H1 (cell line): ENCODE measurements at regions of chr11 and their contacts with region 1.

Region 1: DNA sequence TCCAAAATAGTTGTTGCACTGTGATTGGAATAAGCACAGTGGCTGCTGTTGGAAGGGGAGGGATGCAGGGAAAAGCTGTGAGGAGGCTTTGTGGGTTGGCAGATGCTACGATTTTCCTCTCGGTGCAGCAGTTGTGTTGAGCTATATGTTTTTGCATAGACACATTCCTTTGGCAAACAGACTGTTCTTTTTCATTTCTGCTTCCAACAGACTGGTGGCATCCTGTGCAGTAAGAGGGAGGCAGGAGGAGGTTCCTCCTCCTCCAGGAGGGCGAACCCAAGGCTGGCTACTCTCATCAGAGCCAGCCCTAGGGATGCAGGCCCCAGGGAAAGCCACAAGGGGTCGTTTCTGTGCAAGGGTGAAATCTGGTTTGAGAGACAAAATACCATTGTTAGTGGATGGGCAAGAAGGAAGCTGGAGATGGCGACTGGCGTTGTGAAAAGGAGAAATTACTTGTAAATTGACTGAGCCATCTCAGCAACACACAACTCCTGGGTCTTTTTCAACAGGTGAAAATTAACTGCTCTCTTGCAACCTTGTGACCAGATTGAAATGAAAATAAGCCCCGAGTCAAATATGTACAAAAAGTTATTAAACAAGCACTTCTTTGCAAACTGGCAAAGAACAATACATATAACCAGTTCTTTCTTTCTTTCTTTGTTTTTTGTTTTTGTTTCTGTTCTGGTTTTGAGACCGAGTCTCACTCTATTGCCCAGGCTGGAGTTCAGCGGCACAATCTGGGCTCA is 26.5 kb upstream of the UBASH3B start:
- DNase-seq: peak; percentile 34 to 86
- H3K4me3 ChIP-seq: no peak overlapping the region
- H3K27ac ChIP-seq: no peak overlapping the region
- H3K4me1 ChIP-seq: no peaks in the 10 kb centered on the region
- H3K27me3 ChIP-seq: no peaks in the 10 kb centered on the region
- CTCF ChIP-seq: peak; percentile 85 to 94 (median 88)
- EP300 ChIP-seq: no peak
- POLR2A ChIP-seq: no peak
- RAD21 ChIP-seq: peak; percentile 81 to 86

Region 2: DNA sequence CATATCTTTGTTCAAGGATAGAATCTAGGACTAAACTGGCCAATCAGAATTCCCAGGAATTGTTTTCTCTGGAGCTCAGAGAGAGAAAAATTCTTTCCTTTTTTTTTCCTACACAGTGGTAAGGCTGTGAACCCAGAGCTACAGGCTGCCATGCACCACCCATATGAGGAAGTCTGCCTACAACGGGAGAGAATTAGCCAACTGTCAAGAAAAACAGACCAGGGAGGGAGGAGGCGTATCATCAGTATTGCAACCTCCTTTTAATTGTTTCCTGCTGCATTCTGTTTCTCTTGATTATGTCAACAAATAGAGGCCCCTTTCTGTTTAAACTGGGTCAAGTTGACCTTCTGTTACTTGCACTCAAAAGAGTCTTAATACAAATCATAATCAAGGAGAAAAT is 150.0 kb before region 1 on chr11:
- CTCF ChIA-PET with region 1: no interaction called
- POLR2A ChIA-PET with region 1: no interaction called
- DNase-seq: no peak
- H3K4me3 ChIP-seq: no peak overlapping the region
- H3K27ac ChIP-seq: no peak overlapping the region
- H3K4me1 ChIP-seq: no peaks in the 10 kb centered on the region
- H3K27me3 ChIP-seq: no peaks in the 10 kb centered on the region
- CTCF ChIP-seq: no peak
- EP300 ChIP-seq: no peak
- POLR2A ChIP-seq: no peak
- RAD21 ChIP-seq: no peak

Region 3: GRCh38 chr11:122563761-122564160 is 65.2 kb before region 1 on chr11:
- CTCF ChIA-PET with region 1: no interaction called
- POLR2A ChIA-PET with region 1: no interaction called
- DNase-seq: no peak
- H3K4me3 ChIP-seq: no peak overlapping the region
- H3K27ac ChIP-seq: no peak overlapping the region
- H3K4me1 ChIP-seq: no peaks in the 10 kb centered on the region
- H3K27me3 ChIP-seq: no peaks in the 10 kb centered on the region
- CTCF ChIP-seq: no peak
- EP300 ChIP-seq: no peak
- POLR2A ChIP-seq: no peak
- RAD21 ChIP-seq: no peak

Region 4: GRCh38 chr11:122578168-122578825 is 50.7 kb before region 1 on chr11:
- CTCF ChIA-PET with region 1: interaction called, 13 read pairs
- POLR2A ChIA-PET with region 1: no interaction called
- DNase-seq: no peak
- H3K4me3 ChIP-seq: no peak overlapping the region
- H3K27ac ChIP-seq: no peak overlapping the region
- H3K4me1 ChIP-seq: peaks cover 0 to 3% (median 0%) of the 10 kb centered on the region in 4 experiments; a peak in 2 of 7 replicates
- H3K27me3 ChIP-seq: no peaks in the 10 kb centered on the region
- CTCF ChIP-seq: peak in 2 of 3 experiments; percentile 17 to 27; a peak in 2 of 4 replicates
- EP300 ChIP-seq: no peak
- POLR2A ChIP-seq: no peak
- RAD21 ChIP-seq: peak; percentile 34 to 44

Region 5: GRCh38 chr11:122655527-122656072 is 26.6 kb after region 1 on chr11 and contains the start of gene UBASH3B:
- CTCF ChIA-PET with region 1: interaction called, 16 read pairs
- POLR2A ChIA-PET with region 1: interaction called, 4 read pairs
- DNase-seq: peak in 1 of 2 experiments; percentile 81
- H3K4me3 ChIP-seq: peak within 1 kb of the TSS; percentile 70 to 88 (median 72)
- H3K27ac ChIP-seq: no peak within 1 kb of the TSS
- H3K4me1 ChIP-seq: peaks cover 0 to 10% (median 3%) of the 10 kb centered on the region in 4 experiments; a peak in 6 of 7 replicates
- H3K27me3 ChIP-seq: peaks cover 0 to 21% (median 13%) of the 10 kb centered on the region in 4 experiments; a peak in 6 of 7 replicates
- CTCF ChIP-seq: 0 out of 4 replicates have a peak, but pooled peaks of 1 of the 3 experiments have one; percentile 10
- EP300 ChIP-seq: no peak
- POLR2A ChIP-seq: no peak
- RAD21 ChIP-seq: peak in 1 of 2 experiments; percentile 19; a peak in 1 of 4 replicates
- total RNA-seq, gene UBASH3B: 8.9 and 9.5 TPM in 2 replicates

Region 6: DNA sequence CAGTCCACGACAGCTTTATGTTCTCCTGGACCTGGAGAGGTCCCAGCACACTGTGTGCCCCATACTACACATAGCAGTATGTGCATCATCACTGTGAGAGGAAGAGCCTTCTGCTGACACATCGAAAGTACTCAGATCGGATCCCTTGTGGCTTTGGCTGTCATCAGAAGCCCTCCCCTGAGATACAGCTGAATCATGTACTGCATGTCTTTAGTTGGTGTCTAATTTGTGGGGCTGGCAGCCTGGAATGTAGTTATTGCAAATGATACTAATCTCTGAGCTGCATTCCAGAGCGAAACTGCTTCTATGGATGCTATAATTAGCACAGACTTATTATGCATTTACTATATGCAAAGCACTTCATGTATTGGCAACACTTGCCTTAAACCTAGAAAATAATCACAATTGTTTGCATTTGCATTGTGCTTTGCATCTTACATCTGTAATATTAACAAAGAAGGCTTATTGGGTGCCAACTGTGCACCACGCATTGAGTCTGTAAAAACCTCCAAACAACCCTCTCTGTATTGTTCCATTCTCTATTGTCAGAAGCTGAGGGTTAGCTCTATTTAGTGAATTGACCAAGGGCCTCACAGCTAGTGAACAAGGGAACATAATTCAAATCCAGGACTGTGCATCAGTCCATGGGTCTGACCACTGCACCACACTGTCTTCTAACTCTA is 120.2 kb after region 1 on chr11:
- CTCF ChIA-PET with region 1: interaction called, 186 read pairs
- POLR2A ChIA-PET with region 1: no interaction called
- DNase-seq: no peak
- H3K4me3 ChIP-seq: no peak overlapping the region
- H3K27ac ChIP-seq: no peak overlapping the region
- H3K4me1 ChIP-seq: peaks cover 0 to 2% (median 0%) of the 10 kb centered on the region in 4 experiments; a peak in 1 of 7 replicates
- H3K27me3 ChIP-seq: peaks cover 0 to 5% (median 0%) of the 10 kb centered on the region in 4 experiments; a peak in 1 of 7 replicates
- CTCF ChIP-seq: no peak
- EP300 ChIP-seq: no peak
- POLR2A ChIP-seq: no peak
- RAD21 ChIP-seq: no peak

Region 7: GRCh38 chr11:122796128-122796717 is 167.2 kb after region 1 on chr11:
- CTCF ChIA-PET with region 1: interaction called, 290 read pairs
- POLR2A ChIA-PET with region 1: no interaction called
- DNase-seq: peak in 1 of 2 experiments; percentile 92
- H3K4me3 ChIP-seq: no peak overlapping the region
- H3K27ac ChIP-seq: no peak overlapping the region
- H3K4me1 ChIP-seq: no peaks in the 10 kb centered on the region
- H3K27me3 ChIP-seq: no peaks in the 10 kb centered on the region
- CTCF ChIP-seq: peak; percentile 80 to 97 (median 89)
- EP300 ChIP-seq: no peak
- POLR2A ChIP-seq: no peak
- RAD21 ChIP-seq: peak; percentile 83 to 85

Region 8: DNA sequence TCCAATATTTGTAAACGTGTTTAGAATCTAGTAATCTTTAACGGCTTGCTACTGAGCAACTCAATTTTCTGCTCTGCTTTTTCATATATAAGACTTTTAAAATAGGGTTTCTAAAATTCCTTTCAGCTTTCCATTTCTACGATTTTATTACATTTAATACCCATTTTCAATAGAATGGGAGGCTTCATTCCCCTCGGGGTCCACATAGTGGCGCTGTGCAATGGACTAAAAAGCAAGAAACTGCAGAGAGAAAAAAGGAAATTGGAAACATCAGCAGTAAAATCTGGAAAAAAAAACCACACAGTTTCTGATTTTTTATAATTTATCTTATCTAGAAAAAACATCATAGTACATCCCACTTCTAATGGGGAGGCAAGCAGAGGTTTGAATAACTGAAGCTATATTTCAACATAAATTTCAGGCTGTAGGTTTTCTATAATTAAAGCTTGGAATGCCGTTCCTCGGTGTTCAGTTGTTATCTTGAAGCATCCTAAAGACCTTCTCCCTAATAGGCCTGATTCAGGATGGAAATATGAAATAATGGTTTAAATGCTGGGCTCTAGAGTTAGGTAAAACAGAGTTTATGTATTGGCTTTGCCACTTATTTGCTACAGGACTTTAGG is 234.8 kb after region 1 on chr11:
- CTCF ChIA-PET with region 1: interaction called, 11 read pairs
- POLR2A ChIA-PET with region 1: no interaction called
- DNase-seq: no peak
- H3K4me3 ChIP-seq: no peak overlapping the region
- H3K27ac ChIP-seq: no peak overlapping the region
- H3K4me1 ChIP-seq: no peaks in the 10 kb centered on the region
- H3K27me3 ChIP-seq: no peaks in the 10 kb centered on the region
- CTCF ChIP-seq: peak in 2 of 3 experiments; percentile 61 to 73; a peak in 3 of 4 replicates
- EP300 ChIP-seq: no peak
- POLR2A ChIP-seq: no peak
- RAD21 ChIP-seq: peak; percentile 80 to 82